Astrocyte of the cerebellum (primary cell): ENCODE measurements at regions of chr19 and their contacts with region 1.

Region 1: GRCh38 chr19:3879656-3880055 is 829 bp upstream of the ATCAY start:
- DNase-seq: no peak
- H3K4me3 ChIP-seq: no peak overlapping the region
- CTCF ChIP-seq: no peak

Region 2: GRCh38 chr19:3798137-3798536 is 81.5 kb before region 1 on chr19:
- in situ Hi-C with region 1: loop called (anchors 5 kb)
- DNase-seq: no peak
- H3K4me3 ChIP-seq: no peak overlapping the region
- CTCF ChIP-seq: no peak

Region 3: GRCh38 chr19:4123615-4124568 is 244.2 kb after region 1 on chr19 and contains the start of gene MAP2K2:
- in situ Hi-C with region 1: no loop called
- DNase-seq: peak; percentile 59
- H3K4me3 ChIP-seq: peak within 1 kb of the TSS; percentile 76
- CTCF ChIP-seq: no peak